Activated CD4-positive, alpha-beta T cell treated with anti-CD3 and anti-CD28 coated beads for 36 hours (primary cell): ENCODE measurements at regions of chr11 and their contacts with region 1.

Region 1: GRCh38 chr11:90204832-90205646 is 17.8 kb downstream of the CHORDC1 start:
- DNase-seq: peak; percentile 11
- ATAC-seq: peak; percentile 42
- H3K4me3 Mint-ChIP-seq: no peak overlapping the region
- H3K27ac Mint-ChIP-seq: peak overlapping the region; percentile 39
- H3K4me1 Mint-ChIP-seq: peaks cover 15% of the 10 kb centered on the region
- H3K27me3 Mint-ChIP-seq: no peaks in the 10 kb centered on the region

Region 2: DNA sequence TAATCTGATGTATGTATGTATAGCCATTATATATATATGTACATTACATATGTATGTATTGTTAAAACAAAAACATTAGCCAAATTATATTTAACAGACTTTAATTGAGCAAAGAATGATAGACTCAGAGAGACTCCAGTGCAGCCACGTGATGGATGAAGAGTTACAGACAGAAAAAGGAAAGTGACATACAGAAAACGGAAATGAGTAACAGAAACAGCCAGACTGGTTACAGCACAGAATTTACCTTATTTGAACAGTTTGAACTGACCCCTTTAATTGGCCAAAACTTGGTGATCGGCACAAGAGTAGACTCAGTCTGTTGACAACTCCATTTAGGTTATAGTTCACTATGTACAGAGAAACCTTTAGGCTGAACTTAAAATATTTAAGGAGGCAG is 17.2 kb before region 1 on chr11:
- CTCF ChIA-PET with region 1: interaction called, 10 read pairs
- POLR2A ChIA-PET with region 1: no interaction called
- intact Hi-C with region 1: no loop called
- DNase-seq: no peak
- ATAC-seq: no peak
- H3K4me3 Mint-ChIP-seq: no peak overlapping the region
- H3K27ac Mint-ChIP-seq: no peak overlapping the region
- H3K4me1 Mint-ChIP-seq: no peaks in the 10 kb centered on the region
- H3K27me3 Mint-ChIP-seq: peaks cover 2% of the 10 kb centered on the region

Region 3: DNA sequence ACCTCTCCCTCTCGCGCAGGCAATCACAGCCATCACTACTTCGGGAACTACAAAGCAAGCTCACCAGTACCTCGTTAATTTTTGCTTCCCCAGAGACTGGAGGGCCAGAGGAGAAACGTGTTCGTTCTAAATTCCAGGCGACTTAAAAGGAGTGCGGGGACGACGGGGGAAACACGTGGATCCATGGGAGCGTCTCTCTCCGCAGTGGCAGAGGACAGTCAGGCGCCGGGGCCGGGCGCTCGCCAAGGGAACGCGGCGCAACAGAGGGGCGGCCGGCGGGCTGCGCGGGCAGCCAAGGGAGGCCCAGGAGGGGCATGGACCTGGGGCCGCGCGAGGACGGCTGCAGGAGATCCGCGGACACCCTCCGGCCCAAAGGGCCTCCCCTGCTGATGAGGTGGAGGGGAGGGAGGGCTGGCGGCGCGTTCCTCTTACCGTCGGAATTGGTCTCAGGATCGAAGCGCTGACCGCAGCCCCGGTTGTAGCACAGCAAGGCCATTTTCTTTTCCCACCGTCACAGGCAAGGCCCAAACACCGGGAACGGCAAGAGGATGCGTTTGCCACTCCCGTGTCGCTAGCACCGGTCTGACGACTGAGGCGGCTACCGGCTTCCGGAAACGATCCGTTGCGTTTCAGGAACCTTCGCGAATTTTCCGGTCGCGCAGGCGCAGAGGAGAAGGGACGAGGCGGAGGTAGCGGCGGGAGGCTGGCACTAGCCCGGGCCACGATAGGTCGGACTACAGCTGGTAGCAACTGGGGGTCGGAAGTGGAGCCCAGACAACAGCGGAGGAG is 17.6 kb after region 1 on chr11 and contains the start of gene CHORDC1:
- CTCF ChIA-PET with region 1: interaction called, 24 read pairs
- POLR2A ChIA-PET with region 1: no interaction called
- intact Hi-C with region 1: loop called (anchors 1 to 2 kb)
- DNase-seq: peak; percentile 95
- ATAC-seq: peak; percentile 91
- H3K4me3 Mint-ChIP-seq: peak within 1 kb of the TSS; percentile 94
- H3K27ac Mint-ChIP-seq: peak within 1 kb of the TSS; percentile 97
- H3K4me1 Mint-ChIP-seq: peaks cover 44% of the 10 kb centered on the region
- H3K27me3 Mint-ChIP-seq: no peaks in the 10 kb centered on the region
- total RNA-seq, gene CHORDC1: 85.4 to 112 TPM

Region 4: GRCh38 chr11:90423378-90423777 is 218.3 kb after region 1 on chr11:
- CTCF ChIA-PET with region 1: no interaction called
- POLR2A ChIA-PET with region 1: no interaction called
- intact Hi-C with region 1: no loop called
- DNase-seq: no peak
- ATAC-seq: no peak
- H3K4me3 Mint-ChIP-seq: no peak overlapping the region
- H3K27ac Mint-ChIP-seq: no peak overlapping the region
- H3K4me1 Mint-ChIP-seq: no peaks in the 10 kb centered on the region
- H3K27me3 Mint-ChIP-seq: peaks cover 4% of the 10 kb centered on the region

Region 5: DNA sequence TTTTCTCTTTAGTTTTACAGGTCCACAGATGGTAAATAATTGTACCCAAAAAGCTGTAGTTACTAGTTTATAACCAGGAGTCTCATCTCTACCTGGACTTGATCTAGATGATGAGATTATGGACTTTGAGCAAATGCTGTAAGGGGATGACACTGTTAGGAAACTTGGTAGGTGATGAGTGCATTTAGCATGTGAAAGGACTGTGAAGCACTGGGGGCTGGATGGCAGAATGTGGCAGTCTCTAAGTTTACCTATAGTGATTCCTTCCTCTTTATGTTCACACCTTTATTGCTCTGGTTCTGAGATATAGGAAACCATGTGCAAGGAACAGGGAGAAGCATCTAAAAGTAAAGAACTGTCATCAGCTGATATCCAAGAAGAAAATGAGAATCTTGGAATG is 248.5 kb after region 1 on chr11:
- CTCF ChIA-PET with region 1: no interaction called
- POLR2A ChIA-PET with region 1: no interaction called
- intact Hi-C with region 1: loop called in 1 of 2 experiments (anchors 2 kb)
- DNase-seq: no peak
- ATAC-seq: no peak
- H3K4me3 Mint-ChIP-seq: no peak overlapping the region
- H3K27ac Mint-ChIP-seq: no peak overlapping the region
- H3K4me1 Mint-ChIP-seq: no peaks in the 10 kb centered on the region
- H3K27me3 Mint-ChIP-seq: peaks cover 3% of the 10 kb centered on the region